HCT116 (cell line): ENCODE measurements at regions of chr19 and their contacts with region 1.

Region 1: GRCh38 chr19:6516659-6517291 is 14.1 kb upstream of the TNFSF9 start:
- DNase-seq: peak; percentile 66
- ATAC-seq: peak; percentile 84
- H3K4me3 ChIP-seq: peak overlapping the region; percentile 62 to 70
- H3K27ac ChIP-seq: peak overlapping the region; percentile 70
- H3K4me1 ChIP-seq: peaks cover 10 to 33% of the 10 kb centered on the region in 2 experiments; a peak in 3 of 4 replicates
- H3K27me3 ChIP-seq: no peaks in the 10 kb centered on the region
- CTCF ChIP-seq: peak; percentile 96 to 99 (median 98)
- POLR2A ChIP-seq: no peak
- RAD21 ChIP-seq: peak; percentile 99

Region 2: DNA sequence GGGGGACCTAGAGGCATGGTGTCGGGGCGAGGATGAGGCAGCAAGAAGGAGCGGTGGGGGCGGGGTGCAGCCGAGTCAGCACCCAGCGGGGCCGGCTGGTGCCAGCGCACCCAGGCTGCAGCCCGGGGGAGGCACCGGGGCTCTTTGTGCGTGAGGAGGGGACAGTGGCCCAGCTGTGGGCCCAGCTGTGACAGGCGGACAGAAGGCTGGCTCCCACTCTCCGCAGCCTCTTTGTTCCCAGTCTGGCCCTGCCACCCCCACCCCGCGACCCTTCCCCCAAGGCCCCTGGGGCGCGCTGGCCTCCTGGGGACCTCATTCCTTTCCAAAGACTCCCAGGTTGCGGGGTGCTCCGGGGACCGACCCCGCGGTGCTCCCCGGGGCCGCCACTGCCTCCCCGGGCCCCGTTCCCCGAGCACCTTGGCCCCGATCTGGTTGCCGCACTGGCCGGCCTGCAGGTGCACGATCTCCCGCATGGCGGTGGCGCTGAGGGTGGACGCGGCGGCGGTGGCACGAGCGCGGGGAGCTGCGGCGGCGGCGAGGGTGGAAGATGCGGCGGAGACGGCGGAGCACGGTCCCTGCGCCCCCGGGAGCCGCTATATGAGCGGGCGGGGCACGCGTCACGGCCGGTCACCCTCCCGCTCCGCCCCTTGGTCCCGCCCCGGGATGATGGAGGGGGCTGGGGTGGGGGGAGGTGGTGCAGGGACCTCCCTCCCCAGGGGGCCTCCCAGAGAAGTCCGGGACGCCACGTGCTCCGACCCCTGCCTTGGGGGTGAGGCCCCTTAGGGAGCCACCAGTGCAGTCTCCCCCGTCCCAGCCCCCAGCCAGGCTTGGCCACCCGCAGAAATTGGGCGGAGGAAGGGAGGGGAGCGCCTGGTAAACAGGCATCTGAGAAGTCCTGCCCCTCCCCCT is 14.8 kb before region 1 on chr19 and contains the start of gene TUBB4A:
- CTCF ChIA-PET with region 1: interaction called, 10 read pairs
- POLR2A ChIA-PET with region 1: interaction called, 3 read pairs
- RAD21 ChIA-PET with region 1: interaction called in 1 of 2 experiments, 3 read pairs
- intact Hi-C with region 1: no loop called
- DNase-seq: no peak
- ATAC-seq: peak; percentile 82
- H3K4me3 ChIP-seq: peak within 1 kb of the TSS; percentile 50 to 68
- H3K27ac ChIP-seq: peak within 1 kb of the TSS; percentile 57; the same call in 1 of the 2 replicates
- H3K4me1 ChIP-seq: peaks cover 14 to 35% of the 10 kb centered on the region in 2 experiments
- H3K27me3 ChIP-seq: no peaks in the 10 kb centered on the region
- CTCF ChIP-seq: no peak
- POLR2A ChIP-seq: peak; percentile 40
- RAD21 ChIP-seq: no peak
- total RNA-seq, gene TUBB4A: 32.5 TPM

Region 3: DNA sequence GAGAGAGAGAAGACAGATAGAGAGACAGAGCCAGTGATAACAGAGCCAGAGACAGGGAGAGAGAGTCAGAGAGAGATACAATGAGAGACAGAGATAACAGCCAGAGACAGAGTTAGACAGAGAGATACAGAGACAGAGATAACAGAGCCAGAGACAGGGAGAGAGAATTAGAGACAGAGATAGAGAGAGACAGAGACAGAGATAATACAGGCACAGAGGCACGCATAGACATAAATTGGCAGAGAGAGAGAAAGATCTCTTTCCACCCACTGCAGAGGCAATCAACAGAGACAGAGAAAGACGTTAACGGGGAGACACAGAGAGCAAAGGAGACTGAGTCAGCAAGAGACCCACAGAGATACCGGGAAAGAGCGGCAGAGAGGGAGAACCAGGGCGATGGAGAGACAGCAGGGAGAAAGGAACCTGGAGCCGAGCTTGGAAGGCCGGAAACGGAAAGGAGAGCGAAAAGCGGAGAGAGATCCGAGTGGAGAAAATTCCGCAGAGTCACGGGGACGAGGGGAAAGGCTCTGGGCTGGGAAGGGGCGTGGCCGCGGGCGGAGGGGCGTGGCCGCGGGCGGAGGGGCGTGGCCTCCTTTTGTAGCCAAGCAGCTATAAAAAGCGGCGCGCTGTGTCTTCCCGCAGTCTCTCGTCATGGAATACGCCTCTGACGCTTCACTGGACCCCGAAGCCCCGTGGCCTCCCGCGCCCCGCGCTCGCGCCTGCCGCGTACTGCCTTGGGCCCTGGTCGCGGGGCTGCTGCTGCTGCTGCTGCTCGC is 13.8 kb after region 1 on chr19 and contains the start of gene TNFSF9:
- CTCF ChIA-PET with region 1: interaction called, 7 read pairs
- POLR2A ChIA-PET with region 1: interaction called, 21 read pairs
- RAD21 ChIA-PET with region 1: no interaction called
- intact Hi-C with region 1: no loop called
- DNase-seq: peak; percentile 70
- ATAC-seq: peak; percentile 85
- H3K4me3 ChIP-seq: peak within 1 kb of the TSS; percentile 91 to 95
- H3K27ac ChIP-seq: peak within 1 kb of the TSS; percentile 68
- H3K4me1 ChIP-seq: peaks cover 10 to 33% of the 10 kb centered on the region in 2 experiments
- H3K27me3 ChIP-seq: no peaks in the 10 kb centered on the region
- CTCF ChIP-seq: no peak
- POLR2A ChIP-seq: peak; percentile 99
- RAD21 ChIP-seq: no peak
- total RNA-seq, gene TNFSF9: 25.1 TPM

Region 4: GRCh38 chr19:6632002-6632621 is 115.3 kb after region 1 on chr19:
- CTCF ChIA-PET with region 1: interaction called, 11 read pairs
- POLR2A ChIA-PET with region 1: interaction called, 3 read pairs
- RAD21 ChIA-PET with region 1: interaction called, 8 to 9 read pairs
- intact Hi-C with region 1: loop called (anchors 1 kb)
- DNase-seq: peak; percentile 77
- ATAC-seq: peak; percentile 71
- H3K4me3 ChIP-seq: no peak overlapping the region
- H3K27ac ChIP-seq: no peak overlapping the region
- H3K4me1 ChIP-seq: peaks cover 3 to 14% of the 10 kb centered on the region in 2 experiments; a peak in 3 of 4 replicates
- H3K27me3 ChIP-seq: no peaks in the 10 kb centered on the region
- CTCF ChIP-seq: peak; percentile 70 to 83 (median 76)
- POLR2A ChIP-seq: no peak
- RAD21 ChIP-seq: peak; percentile 80

Region 5: GRCh38 chr19:6718741-6719539 is 202.2 kb after region 1 on chr19:
- CTCF ChIA-PET with region 1: no interaction called
- POLR2A ChIA-PET with region 1: no interaction called
- RAD21 ChIA-PET with region 1: no interaction called
- intact Hi-C with region 1: loop called (anchors 2 kb)
- DNase-seq: peak; percentile 79
- ATAC-seq: peak; percentile 82
- H3K4me3 ChIP-seq: no peak overlapping the region
- H3K27ac ChIP-seq: no peak overlapping the region
- H3K4me1 ChIP-seq: peaks cover 13 to 30% of the 10 kb centered on the region in 2 experiments; a peak in 3 of 4 replicates
- H3K27me3 ChIP-seq: no peaks in the 10 kb centered on the region
- CTCF ChIP-seq: no peak
- POLR2A ChIP-seq: no peak
- RAD21 ChIP-seq: no peak

Region 6: DNA sequence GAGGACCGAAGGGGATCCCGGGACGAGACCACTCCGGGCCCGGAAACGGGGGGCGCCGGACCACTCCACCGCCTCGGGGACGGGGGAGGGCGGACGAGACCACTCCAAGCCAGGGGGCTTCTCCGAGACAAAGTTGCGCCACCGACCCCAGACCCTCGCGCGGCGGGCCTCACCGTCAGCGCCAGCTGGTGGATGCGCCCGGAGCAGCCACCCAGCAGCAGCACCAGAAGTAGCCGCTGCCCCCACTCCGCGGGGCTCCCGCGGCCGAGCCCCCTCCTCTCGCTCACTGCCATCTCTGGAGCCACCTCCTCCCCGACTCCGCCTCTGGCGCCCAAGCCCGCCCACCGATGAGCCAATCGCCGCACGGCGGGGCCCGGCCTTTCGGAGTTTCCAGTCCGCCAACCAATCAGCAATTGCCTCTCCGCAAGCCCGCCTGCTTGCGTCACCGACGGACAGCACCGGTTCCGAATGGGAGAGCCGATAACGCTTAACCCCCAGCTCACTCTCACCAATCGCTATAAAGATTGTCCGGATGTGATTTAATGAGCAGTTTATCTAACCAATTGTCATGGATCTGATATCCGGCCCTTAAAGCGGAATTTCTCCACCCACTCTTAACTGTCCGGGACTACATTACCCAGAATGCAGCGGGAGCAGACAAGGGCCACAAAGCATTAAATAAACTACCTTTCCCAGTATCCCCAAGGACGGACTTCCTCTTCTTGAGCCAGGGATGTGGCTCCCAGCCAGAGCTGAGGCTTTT is 220.7 kb after region 1 on chr19 and contains the start of gene GPR108:
- CTCF ChIA-PET with region 1: interaction called, 13 read pairs
- POLR2A ChIA-PET with region 1: interaction called, 3 read pairs
- RAD21 ChIA-PET with region 1: interaction called in 1 of 2 experiments, 5 read pairs
- intact Hi-C with region 1: loop called (anchors 1 kb)
- DNase-seq: peak; percentile 100
- ATAC-seq: peak; percentile 72
- H3K4me3 ChIP-seq: peak within 1 kb of the TSS; percentile 99
- H3K27ac ChIP-seq: peak within 1 kb of the TSS; percentile 87
- H3K4me1 ChIP-seq: peaks cover 32 to 44% of the 10 kb centered on the region in 2 experiments
- H3K27me3 ChIP-seq: no peaks in the 10 kb centered on the region
- CTCF ChIP-seq: no peak
- POLR2A ChIP-seq: no peak
- RAD21 ChIP-seq: no peak
- total RNA-seq, gene GPR108: 75.0 TPM

Region 7: DNA sequence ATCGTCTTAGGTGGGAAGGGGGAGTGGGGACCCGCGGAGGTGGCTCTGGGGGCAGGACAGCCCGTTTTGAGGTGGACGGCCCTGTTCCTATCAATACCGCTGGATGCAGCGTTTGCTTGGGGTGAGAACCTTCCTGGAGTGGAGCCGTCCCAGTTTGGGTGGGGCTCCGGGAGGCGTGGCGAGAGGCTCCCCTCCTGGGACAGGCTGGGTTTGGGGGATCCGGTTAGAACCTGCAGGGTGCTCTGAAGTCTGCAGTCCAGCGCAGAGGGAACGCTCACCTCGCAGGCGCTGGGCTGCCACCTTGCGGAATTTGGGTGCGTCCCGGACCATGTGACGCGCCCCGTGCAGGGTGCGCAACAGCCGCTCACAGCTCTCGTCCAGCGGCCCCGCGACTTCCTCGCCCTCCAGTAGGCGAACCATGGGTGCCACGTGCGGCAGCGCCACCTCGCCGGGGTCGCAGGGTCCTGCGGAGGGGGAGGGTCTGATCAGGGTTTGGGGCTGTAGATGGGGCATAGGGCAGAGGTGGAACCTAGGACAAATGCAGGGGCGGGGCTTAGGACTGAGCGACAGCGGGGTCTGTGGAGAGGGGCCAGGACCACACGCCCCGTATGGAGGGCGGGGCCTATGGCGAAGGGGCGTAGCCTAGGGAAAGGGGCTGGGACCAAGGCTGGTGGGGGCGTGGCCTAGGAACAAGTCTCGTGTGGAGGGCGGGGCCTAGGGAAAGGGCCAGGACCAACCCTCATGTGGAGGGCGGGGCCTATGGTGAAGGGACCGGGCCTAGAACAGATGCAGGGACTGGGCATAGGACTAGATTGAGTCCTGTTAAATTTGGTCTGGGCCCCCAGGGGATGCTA is 236.6 kb after region 1 on chr19:
- CTCF ChIA-PET with region 1: no interaction called
- POLR2A ChIA-PET with region 1: no interaction called
- RAD21 ChIA-PET with region 1: no interaction called
- intact Hi-C with region 1: loop called (anchors 5 kb)
- DNase-seq: peak; percentile 91
- ATAC-seq: peak; percentile 88
- H3K4me3 ChIP-seq: peak overlapping the region; percentile 26 to 45
- H3K27ac ChIP-seq: peak overlapping the region; percentile 88
- H3K4me1 ChIP-seq: peaks cover 13 to 31% of the 10 kb centered on the region in 2 experiments; a peak in 3 of 4 replicates
- H3K27me3 ChIP-seq: no peaks in the 10 kb centered on the region
- CTCF ChIP-seq: peak in 2 of 3 experiments; percentile 25 to 43; a peak in 4 of 6 replicates
- POLR2A ChIP-seq: peak; percentile 51
- RAD21 ChIP-seq: peak; percentile 78